B cell (primary cell): ENCODE measurements at regions of chr19 and their contacts with region 1.

Region 1: DNA sequence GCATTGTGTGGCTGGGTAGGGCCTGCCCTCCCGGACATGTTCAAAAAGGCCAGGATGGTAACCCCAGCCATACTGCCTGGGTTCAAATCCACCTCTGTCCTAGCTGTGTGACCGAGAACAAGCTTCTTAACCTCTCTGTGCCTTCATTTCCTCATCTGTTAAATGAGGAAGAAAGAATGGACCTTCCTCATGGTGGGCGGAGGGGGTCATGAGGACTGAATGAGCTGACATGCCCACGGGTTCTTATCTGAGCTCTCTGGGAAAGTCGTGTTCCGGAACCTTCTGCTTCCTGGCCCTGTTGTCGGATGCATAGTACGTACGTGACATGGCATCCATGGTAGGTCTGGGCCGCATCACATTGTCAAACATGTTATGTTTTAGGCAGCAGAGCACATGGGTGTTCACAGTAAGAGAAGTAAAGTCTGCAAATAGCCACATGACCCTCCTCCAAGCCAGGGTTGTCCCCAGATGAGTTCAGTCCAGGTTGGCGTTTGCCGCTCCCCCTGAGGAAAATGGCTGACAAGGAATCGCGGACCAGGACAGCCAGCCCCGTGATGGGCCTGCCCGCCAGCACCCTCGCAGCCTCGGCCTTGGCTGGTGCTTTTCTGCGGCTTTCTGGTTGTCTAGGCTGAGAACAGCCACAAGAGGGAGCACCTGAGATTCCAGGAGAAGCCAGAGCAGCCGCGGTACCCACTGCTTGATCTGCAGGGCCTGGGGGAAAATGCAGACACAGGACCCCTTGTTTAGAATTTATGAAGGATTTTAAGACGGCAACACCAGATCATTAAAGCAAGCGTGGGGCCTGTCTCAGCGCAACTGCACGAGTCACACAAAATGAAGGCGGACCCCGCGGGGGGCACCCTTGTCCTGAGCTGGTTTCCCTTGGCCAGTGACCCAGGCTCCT is 2.4 kb upstream of the NTN5 start:
- DNase-seq: peak; percentile 87
- ATAC-seq: peak; percentile 94
- H3K4me3 ChIP-seq: no peak overlapping the region
- H3K4me3 Mint-ChIP-seq: no peak overlapping the region
- H3K27ac ChIP-seq: no peak overlapping the region
- H3K27ac Mint-ChIP-seq: peak overlapping the region; percentile 32
- H3K4me1 ChIP-seq: peaks cover 4 to 10% of the 10 kb centered on the region in 2 donors
- H3K4me1 Mint-ChIP-seq: peaks cover 6% of the 10 kb centered on the region
- H3K27me3 ChIP-seq: no peaks in the 10 kb centered on the region
- H3K27me3 Mint-ChIP-seq: peaks cover 6% of the 10 kb centered on the region
- CTCF ChIP-seq: peak; percentile 86

Region 2: GRCh38 chr19:48660854-48661731 is 14.1 kb before region 1 on chr19:
- CTCF ChIA-PET with region 1: interaction called, 4 read pairs
- POLR2A ChIA-PET with region 1: no interaction called
- intact Hi-C with region 1: loop called (anchors 1 kb)
- DNase-seq: peak; percentile 94
- ATAC-seq: peak; percentile 93
- H3K4me3 ChIP-seq: peak overlapping the region in 4 of 5 experiments; percentile 30 to 56 (median 52)
- H3K4me3 Mint-ChIP-seq: peak overlapping the region; percentile 88
- H3K27ac ChIP-seq: peak overlapping the region; percentile 96 to 97
- H3K27ac Mint-ChIP-seq: peak overlapping the region; percentile 97
- H3K4me1 ChIP-seq: peaks cover 8 to 19% of the 10 kb centered on the region in 2 donors
- H3K4me1 Mint-ChIP-seq: peaks cover 16% of the 10 kb centered on the region
- H3K27me3 ChIP-seq: no peaks in the 10 kb centered on the region
- H3K27me3 Mint-ChIP-seq: no peaks in the 10 kb centered on the region
- CTCF ChIP-seq: no peak

Region 3: GRCh38 chr19:48738557-48739399 is 63.6 kb after region 1 on chr19:
- CTCF ChIA-PET with region 1: interaction called, 18 read pairs
- POLR2A ChIA-PET with region 1: no interaction called
- intact Hi-C with region 1: loop called (anchors 1 kb)
- DNase-seq: peak; percentile 91
- ATAC-seq: peak; percentile 93
- H3K4me3 ChIP-seq: peak overlapping the region in 3 of 5 experiments; percentile 48 to 65 (median 54)
- H3K4me3 Mint-ChIP-seq: peak overlapping the region; percentile 63
- H3K27ac ChIP-seq: no peak overlapping the region
- H3K27ac Mint-ChIP-seq: peak overlapping the region; percentile 67
- H3K4me1 ChIP-seq: peaks cover 22 to 25% of the 10 kb centered on the region in 2 donors
- H3K4me1 Mint-ChIP-seq: peaks cover 15% of the 10 kb centered on the region
- H3K27me3 ChIP-seq: peaks cover 0 to 26% (median 10%) of the 10 kb centered on the region in 4 experiments
- H3K27me3 Mint-ChIP-seq: peaks cover 15% of the 10 kb centered on the region
- CTCF ChIP-seq: peak; percentile 54